Activated B cell treated with CpG ODN at 0.5 μM for 24 hours (primary cell): ENCODE measurements at regions of chr5 and their contacts with region 1.

Region 1: GRCh38 chr5:169583424-169584204 is at the start of gene SPDL1:
- DNase-seq: peak; percentile 84
- ATAC-seq: peak; percentile 93
- H3K4me3 Mint-ChIP-seq: peak within 1 kb of the TSS; percentile 99
- H3K27ac Mint-ChIP-seq: peak within 1 kb of the TSS; percentile 93
- H3K4me1 Mint-ChIP-seq: peaks cover 24% of the 10 kb centered on the region
- H3K27me3 Mint-ChIP-seq: peaks cover 6% of the 10 kb centered on the region
- CTCF ChIP-seq: no peak
- total RNA-seq, gene SPDL1: 13.3 and 20.6 TPM in 2 replicates

Region 2: GRCh38 chr5:168486136-168486879 is 1097.3 kb before region 1 on chr5 and contains the start of gene RARS1:
- CTCF ChIA-PET with region 1: no interaction called
- POLR2A ChIA-PET with region 1: no interaction called
- intact Hi-C with region 1: loop called (anchors 5 kb)
- DNase-seq: peak; percentile 82
- ATAC-seq: peak; percentile 94
- H3K4me3 Mint-ChIP-seq: peak within 1 kb of the TSS; percentile 100
- H3K27ac Mint-ChIP-seq: peak within 1 kb of the TSS; percentile 89
- H3K4me1 Mint-ChIP-seq: peaks cover 30% of the 10 kb centered on the region
- H3K27me3 Mint-ChIP-seq: peaks cover 3% of the 10 kb centered on the region
- CTCF ChIP-seq: peak; percentile 73
- total RNA-seq, gene RARS1: 75.9 and 85.9 TPM in 2 replicates

Region 3: DNA sequence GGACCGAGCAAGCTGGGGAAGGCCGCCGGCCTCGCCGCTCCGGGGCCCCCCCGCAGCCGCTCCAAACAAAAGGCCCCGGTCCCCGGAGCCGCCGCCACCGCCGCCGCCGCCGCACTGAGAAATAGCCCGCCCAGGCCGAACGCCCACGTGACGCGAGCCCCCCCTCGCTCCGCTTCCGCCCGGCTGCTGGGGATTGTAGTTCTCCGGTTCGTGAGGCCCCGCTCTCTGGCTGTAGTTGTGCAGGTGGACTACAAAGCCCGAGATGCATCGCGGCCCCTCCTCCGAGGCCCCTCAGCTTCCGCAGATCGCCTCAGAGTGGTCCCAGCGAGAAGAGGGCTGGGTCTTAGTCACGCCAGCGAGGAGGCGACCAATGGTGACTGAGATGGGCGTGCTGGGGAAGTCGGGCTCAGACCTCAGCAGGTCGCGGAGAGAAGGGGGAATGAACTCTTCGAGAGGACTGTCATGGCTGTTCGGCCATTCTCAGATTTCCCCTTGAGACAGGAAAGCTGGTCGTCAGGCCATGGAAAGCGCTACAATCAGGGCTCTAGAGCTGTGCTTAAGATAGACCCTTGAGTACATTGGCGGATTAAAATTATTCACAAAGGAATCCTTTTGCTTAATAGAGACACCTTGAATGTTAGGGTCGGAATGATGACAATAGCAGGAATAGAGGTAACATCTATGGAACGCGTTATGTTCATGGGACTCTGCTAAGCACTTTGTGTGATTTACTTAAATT is 1004.0 kb before region 1 on chr5:
- CTCF ChIA-PET with region 1: no interaction called
- POLR2A ChIA-PET with region 1: interaction called, 3 read pairs
- intact Hi-C with region 1: loop called (anchors 1 kb)
- DNase-seq: peak; percentile 96
- ATAC-seq: peak; percentile 95
- H3K4me3 Mint-ChIP-seq: peak overlapping the region; percentile 84
- H3K27ac Mint-ChIP-seq: peak overlapping the region; percentile 95
- H3K4me1 Mint-ChIP-seq: peaks cover 48% of the 10 kb centered on the region
- H3K27me3 Mint-ChIP-seq: no peaks in the 10 kb centered on the region
- CTCF ChIP-seq: no peak

Region 4: GRCh38 chr5:168987543-168988300 is 595.9 kb before region 1 on chr5:
- CTCF ChIA-PET with region 1: interaction called, 12 read pairs
- POLR2A ChIA-PET with region 1: interaction called, 9 read pairs
- intact Hi-C with region 1: loop called (anchors 1 kb)
- DNase-seq: no peak
- ATAC-seq: no peak
- H3K4me3 Mint-ChIP-seq: no peak overlapping the region
- H3K27ac Mint-ChIP-seq: no peak overlapping the region
- H3K4me1 Mint-ChIP-seq: no peaks in the 10 kb centered on the region
- H3K27me3 Mint-ChIP-seq: peaks cover 12% of the 10 kb centered on the region
- CTCF ChIP-seq: no peak

Region 5: GRCh38 chr5:169302491-169303118 is 281.0 kb before region 1 on chr5:
- CTCF ChIA-PET with region 1: no interaction called
- POLR2A ChIA-PET with region 1: no interaction called
- intact Hi-C with region 1: loop called (anchors 2 kb)
- DNase-seq: no peak
- ATAC-seq: no peak
- H3K4me3 Mint-ChIP-seq: no peak overlapping the region
- H3K27ac Mint-ChIP-seq: no peak overlapping the region
- H3K4me1 Mint-ChIP-seq: peaks cover 7% of the 10 kb centered on the region
- H3K27me3 Mint-ChIP-seq: peaks cover 47% of the 10 kb centered on the region
- CTCF ChIP-seq: no peak

Region 6: GRCh38 chr5:169650701-169651331 is 67.2 kb after region 1 on chr5:
- CTCF ChIA-PET with region 1: no interaction called
- POLR2A ChIA-PET with region 1: interaction called, 12 read pairs
- intact Hi-C with region 1: loop called (anchors 5 kb)
- DNase-seq: no peak
- ATAC-seq: peak; percentile 67
- H3K4me3 Mint-ChIP-seq: peak overlapping the region; percentile 68
- H3K27ac Mint-ChIP-seq: peak overlapping the region; percentile 95
- H3K4me1 Mint-ChIP-seq: peaks cover 98% of the 10 kb centered on the region
- H3K27me3 Mint-ChIP-seq: no peaks in the 10 kb centered on the region
- CTCF ChIP-seq: no peak

Region 7: GRCh38 chr5:170278611-170279452 is 695.2 kb after region 1 on chr5:
- CTCF ChIA-PET with region 1: no interaction called
- POLR2A ChIA-PET with region 1: no interaction called
- intact Hi-C with region 1: loop called (anchors 5 kb)
- DNase-seq: peak; percentile 62
- ATAC-seq: peak; percentile 86
- H3K4me3 Mint-ChIP-seq: peak overlapping the region; percentile 71
- H3K27ac Mint-ChIP-seq: peak overlapping the region; percentile 95
- H3K4me1 Mint-ChIP-seq: peaks cover 55% of the 10 kb centered on the region
- H3K27me3 Mint-ChIP-seq: no peaks in the 10 kb centered on the region
- CTCF ChIP-seq: no peak